A673 (cell line): ENCODE measurements at regions of chr19 and their contacts with region 1.

Region 1: DNA sequence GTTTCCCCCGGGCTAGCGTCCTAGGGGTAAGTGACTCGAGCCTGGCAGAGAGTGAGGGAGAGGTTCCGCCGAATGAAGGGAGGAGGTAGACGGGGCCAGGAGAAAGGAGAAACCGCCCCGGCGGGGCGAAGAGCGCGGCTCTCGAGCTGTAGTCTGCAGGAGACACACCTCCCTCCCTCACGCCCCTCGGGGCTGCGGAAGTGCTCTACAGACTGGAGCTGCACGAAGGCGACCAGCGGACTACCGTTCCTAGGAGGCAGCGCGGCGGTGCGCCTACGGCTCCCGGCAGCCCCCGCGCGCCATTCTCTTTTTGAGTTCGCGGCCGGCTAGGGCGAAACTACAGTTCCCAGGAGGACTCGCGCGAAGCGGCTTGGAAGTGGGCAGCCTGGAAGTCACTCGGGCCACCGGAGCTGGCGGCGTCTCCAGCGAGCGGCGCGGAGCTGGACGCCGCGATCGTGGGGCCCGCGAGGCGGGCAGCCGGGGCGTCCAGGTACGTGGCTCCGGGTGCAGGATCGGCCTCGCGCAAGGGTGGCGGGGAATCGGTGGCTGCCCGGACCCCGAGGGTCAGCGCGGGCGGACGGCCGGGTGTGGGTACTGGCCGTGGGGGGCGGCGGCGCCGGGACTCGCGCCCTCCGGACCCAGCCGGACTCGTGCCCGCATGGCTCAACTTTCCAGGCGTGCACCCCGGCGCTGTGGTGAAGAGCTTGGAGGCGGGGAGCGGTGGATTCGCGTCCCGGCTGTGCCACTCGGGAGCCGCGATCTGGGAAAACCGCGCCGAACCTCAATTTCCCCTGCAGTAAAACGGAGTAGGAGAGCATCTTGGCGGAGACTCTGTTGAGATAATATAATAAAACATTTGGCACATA is at the start of gene SIPA1L3:
- DNase-seq: peak; percentile 97
- H3K4me3 ChIP-seq: peak within 1 kb of the TSS; percentile 91
- H3K27ac ChIP-seq: peak within 1 kb of the TSS; percentile 79
- H3K4me1 ChIP-seq: no peaks in the 10 kb centered on the region
- H3K27me3 ChIP-seq: no peaks in the 10 kb centered on the region
- CTCF ChIP-seq: no peak
- total RNA-seq, gene SIPA1L3: 17.5 and 19.9 TPM in 2 replicates

Region 2: DNA sequence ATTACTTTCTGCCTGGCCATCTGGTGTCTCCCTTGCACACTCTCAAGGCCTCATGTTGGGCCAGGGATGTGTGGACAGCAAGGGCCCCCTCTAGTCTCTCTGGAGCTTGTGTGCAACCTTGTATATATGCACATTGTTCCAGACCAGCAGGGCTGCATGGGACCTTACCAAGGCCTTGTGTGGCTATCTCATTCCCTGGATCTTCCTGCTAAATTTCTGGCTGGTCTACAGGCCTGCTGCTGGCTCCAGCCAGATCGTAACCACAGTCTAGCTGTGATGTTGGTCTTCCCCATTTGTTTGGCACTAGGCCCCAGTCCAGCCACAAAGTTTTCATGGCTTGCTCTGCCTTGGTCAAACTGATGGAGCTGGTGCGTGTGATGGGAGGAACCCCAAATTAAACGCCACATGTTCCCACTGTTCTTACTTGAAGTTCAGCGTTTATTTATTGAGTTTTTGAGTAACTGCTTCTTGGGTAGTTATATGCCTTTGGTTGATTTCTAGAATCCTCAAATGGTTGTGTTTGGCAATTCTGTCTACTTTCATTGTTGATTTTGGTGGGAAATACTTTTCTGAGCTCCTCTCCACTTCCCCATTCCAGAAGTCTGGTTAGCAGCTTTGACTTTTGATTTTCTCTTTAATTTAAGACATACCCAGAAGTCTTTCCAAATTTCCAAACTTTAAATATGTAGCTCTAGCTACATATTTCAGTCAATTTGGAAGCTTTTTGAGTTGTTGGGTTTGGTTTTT is 56.3 kb after region 1 on chr19:
- CTCF ChIA-PET with region 1: no interaction called
- POLR2A ChIA-PET with region 1: no interaction called
- intact Hi-C with region 1: no loop called
- DNase-seq: no peak
- H3K4me3 ChIP-seq: no peak overlapping the region
- H3K27ac ChIP-seq: no peak overlapping the region
- H3K4me1 ChIP-seq: no peaks in the 10 kb centered on the region
- H3K27me3 ChIP-seq: no peaks in the 10 kb centered on the region
- CTCF ChIP-seq: no peak

Region 3: DNA sequence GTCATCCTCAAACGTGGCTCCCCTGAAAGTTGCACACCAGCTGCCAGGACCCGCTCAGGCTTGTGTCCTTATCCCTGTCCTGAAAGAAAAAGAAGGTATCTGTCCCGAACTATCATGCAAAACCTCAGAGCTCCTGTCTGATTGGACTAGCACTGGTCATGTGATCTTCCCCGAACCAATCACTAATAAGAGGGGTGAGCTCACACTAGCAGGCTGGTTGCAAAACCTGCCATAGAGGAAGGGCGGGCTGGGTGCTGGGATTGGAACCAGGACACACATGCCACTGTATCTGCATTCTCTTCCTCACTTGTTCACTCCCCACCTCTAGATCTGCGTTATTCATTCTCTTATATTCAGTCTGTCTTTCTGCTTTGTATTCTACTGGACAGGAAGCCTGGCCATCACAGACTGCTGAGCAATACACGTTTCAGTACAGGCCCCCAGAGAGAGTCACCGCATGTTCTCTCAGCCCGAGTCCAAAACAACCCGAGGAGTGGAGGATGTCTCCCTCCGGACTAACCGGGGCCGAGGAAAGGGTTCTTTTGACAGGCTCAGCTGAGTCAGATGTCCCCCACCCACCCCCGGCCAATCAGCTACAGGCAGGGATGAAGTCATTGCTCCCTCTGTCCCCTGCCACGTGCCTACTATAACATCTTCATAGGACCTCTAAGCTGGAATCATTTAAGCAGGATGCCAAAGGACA is 97.6 kb after region 1 on chr19:
- CTCF ChIA-PET with region 1: interaction called, 10 read pairs
- POLR2A ChIA-PET with region 1: no interaction called
- intact Hi-C with region 1: loop called (anchors 5 kb)
- DNase-seq: peak; percentile 94
- H3K4me3 ChIP-seq: peak overlapping the region; percentile 43
- H3K27ac ChIP-seq: peak overlapping the region; percentile 90
- H3K4me1 ChIP-seq: peaks cover 22% of the 10 kb centered on the region
- H3K27me3 ChIP-seq: no peaks in the 10 kb centered on the region
- CTCF ChIP-seq: no peak

Region 4: DNA sequence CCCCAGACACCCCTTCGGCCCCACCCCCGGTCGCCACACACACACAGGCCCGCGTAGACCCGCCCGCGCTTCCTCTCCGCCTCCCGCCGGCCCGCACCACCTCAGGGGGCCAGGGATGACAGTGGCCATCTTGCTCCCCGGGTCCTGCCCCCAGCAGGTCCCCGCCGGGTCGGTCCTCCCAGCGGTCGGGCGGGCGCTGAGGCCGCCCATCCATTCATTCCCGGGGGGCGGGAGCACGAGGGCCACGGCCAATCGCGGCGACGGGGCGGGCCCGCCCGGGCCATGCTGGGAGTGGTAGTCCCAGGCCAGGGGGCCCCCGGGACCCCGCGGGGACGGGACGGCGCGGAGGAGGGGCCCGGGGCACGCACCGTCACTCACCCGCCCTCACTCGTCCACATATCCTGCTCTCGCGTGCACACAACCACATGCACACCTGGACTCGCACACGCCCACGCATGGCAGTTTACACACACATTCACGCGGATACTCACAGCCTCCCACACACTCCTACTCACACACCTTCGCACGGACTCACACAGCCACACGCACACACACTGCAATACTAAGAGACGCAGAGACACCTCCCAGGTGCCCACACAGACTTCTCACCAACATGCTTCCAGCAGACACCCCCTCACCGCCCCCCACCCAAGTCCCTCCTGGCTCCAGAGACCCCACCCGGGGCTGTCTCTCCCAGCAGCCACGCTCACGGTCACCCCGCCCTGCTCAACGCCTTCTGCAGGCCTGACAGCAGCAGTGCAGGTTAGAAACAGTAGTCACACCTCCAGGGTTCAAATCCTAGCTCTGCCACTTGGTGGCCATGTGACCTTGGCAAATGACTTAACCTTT is 317.1 kb after region 1 on chr19 and contains the start of gene DPF1:
- CTCF ChIA-PET with region 1: no interaction called
- POLR2A ChIA-PET with region 1: no interaction called
- intact Hi-C with region 1: loop called (anchors 10 kb)
- DNase-seq: peak; percentile 90
- H3K4me3 ChIP-seq: peak within 1 kb of the TSS; percentile 74
- H3K27ac ChIP-seq: no peak within 1 kb of the TSS
- H3K4me1 ChIP-seq: no peaks in the 10 kb centered on the region
- H3K27me3 ChIP-seq: no peaks in the 10 kb centered on the region
- CTCF ChIP-seq: 0 out of 2 replicates have a peak, but pooled peaks have one; percentile 25
- total RNA-seq, gene DPF1: 6.3 and 8.1 TPM in 2 replicates